ENCODE measurements at regions of chr6 and their contacts with region 1.

Region 1: GRCh38 chr6:68967549-68968300 is 332.6 kb downstream of the ADGRB3 start:
- DNase-seq: peak; percentile 43
- CTCF ChIP-seq: peak; percentile 87

Region 2: DNA sequence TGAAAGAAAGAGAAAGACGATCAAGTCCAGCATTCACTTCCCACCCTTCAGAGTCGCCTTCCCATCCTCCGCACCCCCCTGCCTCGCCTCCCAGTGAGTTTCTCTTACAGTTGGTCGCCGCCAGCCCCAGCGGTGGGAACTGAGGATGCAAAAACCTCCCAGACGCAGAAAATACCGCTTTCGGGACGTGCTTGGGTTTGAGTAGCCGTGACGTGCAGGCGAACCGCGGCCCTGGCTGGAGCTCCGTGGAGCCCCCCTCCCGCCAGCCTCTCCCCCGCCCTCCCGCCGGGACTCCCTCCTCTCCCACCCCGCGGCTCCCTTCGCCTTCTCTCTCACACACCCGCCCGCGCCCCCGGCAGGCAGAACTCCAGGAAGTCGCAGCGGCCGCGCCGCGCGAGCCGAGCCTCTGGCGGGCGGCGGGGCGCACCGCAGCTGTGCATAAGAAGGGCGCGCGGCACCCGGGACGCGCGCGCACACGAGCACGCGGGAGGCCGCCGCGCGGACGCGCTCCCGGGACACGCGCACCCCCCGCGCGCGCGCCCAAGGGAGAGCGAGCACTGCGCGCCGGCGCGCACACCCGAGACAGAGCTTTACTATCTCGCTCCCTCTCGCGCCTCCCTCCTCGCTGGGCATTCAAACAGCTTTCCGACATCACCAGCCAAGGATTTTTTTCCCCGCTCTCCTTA is 332.9 kb before region 1 on chr6 and contains the start of gene ADGRB3:
- in situ Hi-C with region 1: loop called (anchors 25 kb)
- DNase-seq: peak; percentile 77
- CTCF ChIP-seq: no peak